Activated B cell treated with CpG ODN at 0.5 μM for 24 hours (primary cell): ENCODE measurements at regions of chr20 and their contacts with region 1.

Region 1: GRCh38 chr20:4813863-4814695 is 92.4 kb downstream of the PRND start:
- DNase-seq: peak; percentile 70
- ATAC-seq: peak; percentile 49
- H3K4me3 Mint-ChIP-seq: peak overlapping the region; percentile 89
- H3K27ac Mint-ChIP-seq: peak overlapping the region; percentile 99
- H3K4me1 Mint-ChIP-seq: peaks cover 98% of the 10 kb centered on the region
- H3K27me3 Mint-ChIP-seq: no peaks in the 10 kb centered on the region
- CTCF ChIP-seq: no peak

Region 2: DNA sequence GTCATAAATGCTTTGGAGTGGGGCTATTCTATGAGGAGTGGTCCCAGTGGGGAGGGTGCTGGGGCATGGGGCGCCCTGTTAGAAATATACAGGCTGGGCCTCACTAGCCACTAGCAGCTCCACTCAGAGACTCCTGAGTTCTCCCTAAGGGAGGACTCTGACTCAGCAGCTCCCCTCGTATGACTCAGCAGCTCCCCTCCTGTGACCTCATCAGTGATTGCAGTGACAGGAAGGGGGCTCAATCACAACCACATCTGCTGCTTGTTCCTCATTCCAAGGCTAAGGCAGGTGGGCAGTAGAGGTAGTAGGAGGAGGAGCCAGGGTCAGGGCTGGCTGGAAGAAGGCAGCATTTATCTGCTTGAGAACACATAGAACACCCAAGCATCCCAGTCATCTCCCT is 18.7 kb before region 1 on chr20:
- CTCF ChIA-PET with region 1: interaction called, 4 read pairs
- POLR2A ChIA-PET with region 1: interaction called, 24 read pairs
- intact Hi-C with region 1: loop called (anchors 2 kb)
- DNase-seq: no peak
- ATAC-seq: peak; percentile 74
- H3K4me3 Mint-ChIP-seq: no peak overlapping the region
- H3K27ac Mint-ChIP-seq: peak overlapping the region; percentile 61
- H3K4me1 Mint-ChIP-seq: peaks cover 7% of the 10 kb centered on the region
- H3K27me3 Mint-ChIP-seq: no peaks in the 10 kb centered on the region
- CTCF ChIP-seq: no peak

Region 3: DNA sequence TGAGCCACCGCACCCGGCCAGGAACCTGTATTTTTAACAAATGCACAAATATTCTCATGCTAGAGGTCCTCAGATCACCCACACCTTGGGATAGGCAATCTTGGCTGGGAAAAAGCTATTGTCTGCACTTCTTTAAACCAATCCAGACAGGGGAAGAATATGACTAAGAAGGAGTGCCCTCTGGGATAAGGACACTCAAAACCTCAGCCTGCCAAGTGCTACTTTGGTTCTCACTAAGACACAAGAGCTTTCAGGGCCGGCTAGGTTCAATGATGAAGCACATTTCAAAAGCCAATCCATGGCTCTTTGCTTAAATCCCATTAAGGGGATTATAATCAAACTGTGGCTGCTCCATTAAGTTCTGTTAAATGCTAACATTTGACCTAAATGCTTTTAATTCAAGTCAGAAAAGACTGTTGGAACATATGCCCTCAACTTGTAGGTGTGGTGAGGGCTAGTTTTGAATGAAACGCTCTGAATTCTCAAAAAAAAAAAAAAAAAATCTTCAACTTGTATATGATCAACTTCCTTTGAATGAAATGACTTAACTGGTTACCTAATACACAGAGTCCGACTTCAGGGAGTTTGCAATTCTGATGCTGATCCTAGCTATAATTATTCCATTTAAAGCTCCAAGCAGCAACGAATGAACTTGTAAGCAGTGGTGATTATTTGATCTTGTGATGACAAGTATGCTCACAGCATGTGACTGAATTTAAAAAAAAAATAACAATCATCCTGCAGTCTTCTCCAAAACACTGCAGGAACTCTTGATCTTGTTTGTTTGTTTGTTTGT is 130.6 kb after region 1 on chr20:
- CTCF ChIA-PET with region 1: interaction called, 4 read pairs
- POLR2A ChIA-PET with region 1: interaction called, 35 read pairs
- intact Hi-C with region 1: loop called (anchors 1 kb)
- DNase-seq: no peak
- ATAC-seq: no peak
- H3K4me3 Mint-ChIP-seq: no peak overlapping the region
- H3K27ac Mint-ChIP-seq: no peak overlapping the region
- H3K4me1 Mint-ChIP-seq: peaks cover 85% of the 10 kb centered on the region
- H3K27me3 Mint-ChIP-seq: no peaks in the 10 kb centered on the region
- CTCF ChIP-seq: no peak

Region 4: GRCh38 chr20:4973330-4974097 is 159.4 kb after region 1 on chr20:
- CTCF ChIA-PET with region 1: interaction called, 4 read pairs
- POLR2A ChIA-PET with region 1: interaction called, 44 read pairs
- intact Hi-C with region 1: loop called (anchors 1 kb)
- DNase-seq: peak; percentile 59
- ATAC-seq: peak; percentile 78
- H3K4me3 Mint-ChIP-seq: peak overlapping the region; percentile 81
- H3K27ac Mint-ChIP-seq: peak overlapping the region; percentile 96
- H3K4me1 Mint-ChIP-seq: peaks cover 67% of the 10 kb centered on the region
- H3K27me3 Mint-ChIP-seq: no peaks in the 10 kb centered on the region
- CTCF ChIP-seq: no peak

Region 5: DNA sequence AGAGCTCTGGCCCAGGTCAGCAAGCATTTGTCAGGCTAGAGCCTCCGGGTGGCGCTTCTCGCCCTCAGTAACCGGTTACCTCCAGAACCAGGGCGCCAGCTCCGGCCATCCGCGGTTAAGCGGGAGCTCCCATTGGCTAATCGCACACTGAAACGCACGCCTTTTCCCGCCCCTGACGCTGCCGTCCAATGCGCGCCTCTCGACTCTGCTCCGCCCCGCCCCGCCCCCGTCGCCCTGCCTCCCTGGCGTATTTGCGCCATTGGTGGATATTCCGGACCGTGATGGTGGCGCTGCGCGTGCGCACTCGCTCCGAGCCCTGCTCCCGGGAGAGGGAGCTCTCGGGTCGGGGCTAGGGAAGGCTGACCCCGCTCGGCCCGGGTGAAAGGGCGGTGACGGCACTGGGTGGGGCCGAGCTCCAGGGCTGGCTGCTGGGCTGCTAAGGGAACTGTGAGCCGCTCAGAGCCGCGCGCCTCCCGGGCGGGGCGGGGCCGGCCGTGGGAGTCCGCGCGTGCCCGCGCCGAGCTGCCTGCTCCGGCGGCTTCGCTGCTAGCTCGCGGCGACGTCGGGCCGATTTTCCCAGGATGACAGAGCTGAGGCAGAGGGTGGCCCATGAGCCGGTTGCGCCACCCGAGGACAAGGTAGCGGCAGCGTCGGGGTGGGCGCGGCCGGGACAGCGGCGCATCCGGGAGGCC is 312.6 kb after region 1 on chr20 and contains the start of gene CDS2:
- CTCF ChIA-PET with region 1: interaction called, 8 read pairs
- POLR2A ChIA-PET with region 1: interaction called, 26 read pairs
- intact Hi-C with region 1: loop called (anchors 2 kb)
- DNase-seq: peak; percentile 99
- ATAC-seq: peak; percentile 87
- H3K4me3 Mint-ChIP-seq: peak within 1 kb of the TSS; percentile 87
- H3K27ac Mint-ChIP-seq: peak within 1 kb of the TSS; percentile 90
- H3K4me1 Mint-ChIP-seq: peaks cover 33% of the 10 kb centered on the region
- H3K27me3 Mint-ChIP-seq: no peaks in the 10 kb centered on the region
- CTCF ChIP-seq: no peak
- total RNA-seq, gene CDS2: 32.4 and 37.4 TPM in 2 replicates